ENCODE measurements at regions of chr17 and their contacts with region 1.

Region 1: DNA sequence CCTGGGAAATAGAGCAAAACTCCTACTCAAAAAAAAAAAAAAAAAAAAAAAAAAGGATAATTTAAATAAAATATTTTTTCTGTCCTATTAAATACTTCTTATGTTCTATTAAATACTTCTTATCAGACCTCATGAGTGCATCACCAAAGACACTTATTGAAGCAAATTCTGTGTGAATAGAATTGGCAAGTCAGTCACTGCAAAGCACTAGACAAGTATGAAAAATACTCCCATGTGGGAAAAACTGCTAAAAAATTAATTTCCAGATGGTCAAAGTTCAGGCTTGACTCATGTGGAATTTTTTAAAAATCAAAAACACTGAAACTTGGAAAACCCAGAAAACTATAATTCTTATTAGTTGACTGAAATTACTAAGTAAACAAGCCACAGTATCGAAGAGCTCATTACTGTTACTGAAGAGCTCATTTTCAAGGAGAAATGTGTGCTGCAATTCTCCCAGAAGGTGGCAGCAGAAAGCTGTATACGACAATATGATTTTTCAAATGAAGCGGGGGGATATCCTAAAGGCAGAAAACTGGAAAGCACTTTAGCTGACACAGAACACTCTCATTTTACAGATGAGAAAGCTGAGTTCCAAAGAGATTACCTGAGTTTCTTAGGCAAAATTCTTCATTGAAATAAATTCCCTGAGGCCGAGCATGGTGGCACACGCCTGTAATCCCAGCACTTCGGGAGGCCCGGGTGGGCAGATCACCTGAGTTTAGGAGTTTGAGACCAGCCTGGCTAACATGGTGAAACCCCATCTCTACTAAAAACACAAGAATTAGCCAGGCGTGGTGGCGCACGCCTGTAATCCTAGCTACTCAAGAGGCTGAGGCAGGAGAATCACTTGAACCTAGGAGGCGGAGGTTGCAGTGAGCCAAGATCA is 15.9 kb upstream of the FBXO47 start:
- DNase-seq: peak in 1 of 3 donors; percentile 70
- ATAC-seq: peak; percentile 67
- H3K4me3 ChIP-seq: no peak overlapping the region
- H3K4me1 ChIP-seq: peaks cover 6% of the 10 kb centered on the region
- CTCF ChIP-seq: peak; percentile 71

Region 2: GRCh38 chr17:38922538-38923297 is 60.4 kb before region 1 on chr17:
- intact Hi-C with region 1: no loop called
- DNase-seq: peak in 1 of 3 donors; percentile 82
- ATAC-seq: peak; percentile 40
- H3K4me3 ChIP-seq: no peak overlapping the region
- H3K4me1 ChIP-seq: peaks cover 5% of the 10 kb centered on the region
- CTCF ChIP-seq: no peak

Region 3: GRCh38 chr17:39115135-39115534 is 132.0 kb after region 1 on chr17:
- intact Hi-C with region 1: no loop called
- DNase-seq: no peak
- ATAC-seq: no peak
- H3K4me3 ChIP-seq: no peak overlapping the region
- H3K4me1 ChIP-seq: no peaks in the 10 kb centered on the region
- CTCF ChIP-seq: no peak

Region 4: DNA sequence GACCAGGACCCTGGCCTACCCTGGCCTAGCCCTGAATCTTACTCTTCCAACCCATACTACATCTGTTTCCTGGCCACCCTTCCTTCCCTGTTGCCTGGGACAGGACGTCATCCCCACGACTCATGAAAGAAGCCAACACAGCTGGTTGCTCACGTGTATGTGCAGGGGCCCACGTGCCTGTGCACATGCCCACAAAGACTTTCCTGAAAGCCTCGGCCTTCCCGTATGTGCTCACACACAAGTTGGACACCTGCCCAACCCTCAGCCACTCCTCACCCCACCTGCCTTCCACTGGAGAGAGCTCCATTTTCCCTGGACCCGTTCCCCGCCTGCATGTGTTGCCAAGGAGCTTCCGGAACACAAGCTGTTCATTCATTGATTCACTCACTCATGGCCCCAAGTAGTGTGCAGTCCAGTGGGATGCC is 161.3 kb after region 1 on chr17:
- intact Hi-C with region 1: loop called in 1 of 2 experiments (anchors 10 kb)
- DNase-seq: peak; percentile 62 to 83 (median 67)
- ATAC-seq: peak; percentile 88
- H3K4me3 ChIP-seq: no peak overlapping the region
- H3K4me1 ChIP-seq: no peaks in the 10 kb centered on the region
- CTCF ChIP-seq: no peak

Region 5: DNA sequence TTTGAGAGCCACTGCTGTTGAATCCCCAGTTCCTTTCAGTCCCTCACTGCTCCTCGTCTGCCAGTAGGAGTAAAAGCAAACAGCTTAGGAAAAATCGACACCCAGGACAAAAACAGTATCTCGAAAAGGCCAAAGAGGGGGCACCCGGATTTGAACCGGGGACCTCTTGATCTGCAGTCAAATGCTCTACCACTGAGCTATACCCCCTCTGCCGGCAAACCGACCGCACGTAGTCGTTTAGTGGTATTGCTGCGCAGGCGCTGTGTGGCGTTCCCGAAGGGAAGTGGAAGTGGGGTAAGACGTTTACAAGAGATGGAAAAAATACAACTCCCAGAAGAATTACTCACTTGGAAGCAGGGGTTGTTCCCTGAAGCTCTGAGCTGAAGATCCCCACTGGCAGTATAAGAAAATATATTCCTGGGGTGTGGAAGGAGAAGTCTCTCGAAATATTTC is 170.5 kb after region 1 on chr17:
- intact Hi-C with region 1: loop called (anchors 10 kb)
- DNase-seq: peak; percentile 92 to 96 (median 93)
- ATAC-seq: peak; percentile 79
- H3K4me3 ChIP-seq: peak overlapping the region; percentile 54
- H3K4me1 ChIP-seq: peaks cover 13% of the 10 kb centered on the region
- CTCF ChIP-seq: no peak

Region 6: GRCh38 chr17:39244600-39245570 is 261.8 kb after region 1 on chr17:
- intact Hi-C with region 1: loop called in 1 of 2 experiments (anchors 10 kb)
- DNase-seq: peak; percentile 77 to 96 (median 88)
- ATAC-seq: peak; percentile 97
- H3K4me3 ChIP-seq: no peak overlapping the region
- H3K4me1 ChIP-seq: peaks cover 5% of the 10 kb centered on the region
- CTCF ChIP-seq: peak; percentile 75

Measured in mucosa of descending colon (tissue), 3 donors.